Common myeloid progenitor, CD34-positive (primary cell): ENCODE measurements at regions of chr1 and their contacts with region 1.

Region 1: GRCh38 chr1:39575191-39576015 is 1.2 kb downstream of the PABPC4 start:
- DNase-seq: peak; percentile 22 to 62 (median 45)
- H3K4me3 ChIP-seq: peak overlapping the region; percentile 69 to 87 (median 80)
- H3K27ac ChIP-seq: peak overlapping the region in 1 of 2 experiments; percentile 81
- H3K4me1 ChIP-seq: peaks cover 3 to 29% (median 22%) of the 10 kb centered on the region in 4 experiments
- H3K27me3 ChIP-seq: no peaks in the 10 kb centered on the region

Region 2: DNA sequence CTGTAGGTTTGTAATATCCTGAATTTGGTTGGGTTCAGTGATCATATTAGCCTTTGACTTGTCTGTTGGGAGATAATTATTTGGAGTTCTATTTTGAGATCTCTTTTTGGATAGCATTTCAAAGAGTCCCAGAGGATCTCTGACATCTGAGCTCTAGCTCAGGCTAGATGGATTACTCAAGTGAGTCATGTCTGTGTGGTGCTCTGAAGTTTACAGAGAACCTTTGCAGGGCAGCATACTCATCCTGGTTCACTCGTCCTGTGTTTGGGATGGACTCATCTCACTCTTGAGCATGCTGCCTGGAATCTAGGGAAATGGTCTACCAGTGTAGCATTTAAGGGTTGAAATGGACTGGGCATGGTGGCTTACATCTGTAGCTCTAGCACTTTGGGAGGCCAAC is 113.3 kb before region 1 on chr1:
- CTCF ChIA-PET with region 1: no interaction called
- POLR2A ChIA-PET with region 1: no interaction called
- DNase-seq: no peak
- H3K4me3 ChIP-seq: no peak overlapping the region
- H3K27ac ChIP-seq: no peak overlapping the region
- H3K4me1 ChIP-seq: no peaks in the 10 kb centered on the region
- H3K27me3 ChIP-seq: no peaks in the 10 kb centered on the region

Region 3: DNA sequence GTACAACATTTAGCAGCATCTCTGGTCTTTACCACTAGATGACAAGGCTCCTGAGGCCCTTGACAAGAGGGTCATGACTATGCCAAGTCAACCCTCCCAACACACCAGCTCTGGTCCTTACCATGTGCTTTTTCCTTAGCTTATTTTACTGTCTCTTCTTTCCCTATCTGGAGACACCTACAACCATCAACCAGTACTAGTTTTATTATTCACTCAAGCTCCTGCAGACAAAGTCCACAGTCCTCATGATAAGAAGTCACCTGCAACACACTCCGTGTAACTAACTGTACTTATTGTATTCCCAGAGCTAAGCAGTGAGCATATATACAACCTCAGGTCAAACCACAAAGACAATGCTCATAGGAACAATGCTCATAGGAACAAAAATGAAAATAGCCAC is 14.1 kb before region 1 on chr1:
- CTCF ChIA-PET with region 1: interaction called, 10 read pairs
- POLR2A ChIA-PET with region 1: no interaction called
- DNase-seq: no peak
- H3K4me3 ChIP-seq: no peak overlapping the region
- H3K27ac ChIP-seq: no peak overlapping the region
- H3K4me1 ChIP-seq: peaks cover 0 to 6% (median 0%) of the 10 kb centered on the region in 4 experiments
- H3K27me3 ChIP-seq: no peaks in the 10 kb centered on the region